HEK293 (cell line): ENCODE measurements at regions of chr9 and their contacts with region 1.

Region 1: GRCh38 chr9:114487607-114488300 is 17.5 kb downstream of the WHRN start:
- H3K4me3 ChIP-seq: no peak overlapping the region
- H3K27ac ChIP-seq: no peak overlapping the region
- H3K4me1 ChIP-seq: no peaks in the 10 kb centered on the region
- CTCF ChIP-seq: peak; percentile 65; the same call in 1 of the 2 replicates

Region 2: GRCh38 chr9:114382699-114383520 is 104.8 kb before region 1 on chr9:
- CTCF ChIA-PET with region 1: no interaction called
- POLR2A ChIA-PET with region 1: no interaction called
- H3K4me3 ChIP-seq: no peak overlapping the region
- H3K27ac ChIP-seq: no peak overlapping the region
- H3K4me1 ChIP-seq: no peaks in the 10 kb centered on the region
- CTCF ChIP-seq: peak; percentile 34; the same call in 1 of the 2 replicates

Region 3: GRCh38 chr9:114471157-114471556 is 16.6 kb before region 1 on chr9:
- CTCF ChIA-PET with region 1: interaction called, 10 read pairs
- POLR2A ChIA-PET with region 1: no interaction called
- H3K4me3 ChIP-seq: no peak overlapping the region
- H3K27ac ChIP-seq: no peak overlapping the region
- H3K4me1 ChIP-seq: no peaks in the 10 kb centered on the region
- CTCF ChIP-seq: no peak

Region 4: DNA sequence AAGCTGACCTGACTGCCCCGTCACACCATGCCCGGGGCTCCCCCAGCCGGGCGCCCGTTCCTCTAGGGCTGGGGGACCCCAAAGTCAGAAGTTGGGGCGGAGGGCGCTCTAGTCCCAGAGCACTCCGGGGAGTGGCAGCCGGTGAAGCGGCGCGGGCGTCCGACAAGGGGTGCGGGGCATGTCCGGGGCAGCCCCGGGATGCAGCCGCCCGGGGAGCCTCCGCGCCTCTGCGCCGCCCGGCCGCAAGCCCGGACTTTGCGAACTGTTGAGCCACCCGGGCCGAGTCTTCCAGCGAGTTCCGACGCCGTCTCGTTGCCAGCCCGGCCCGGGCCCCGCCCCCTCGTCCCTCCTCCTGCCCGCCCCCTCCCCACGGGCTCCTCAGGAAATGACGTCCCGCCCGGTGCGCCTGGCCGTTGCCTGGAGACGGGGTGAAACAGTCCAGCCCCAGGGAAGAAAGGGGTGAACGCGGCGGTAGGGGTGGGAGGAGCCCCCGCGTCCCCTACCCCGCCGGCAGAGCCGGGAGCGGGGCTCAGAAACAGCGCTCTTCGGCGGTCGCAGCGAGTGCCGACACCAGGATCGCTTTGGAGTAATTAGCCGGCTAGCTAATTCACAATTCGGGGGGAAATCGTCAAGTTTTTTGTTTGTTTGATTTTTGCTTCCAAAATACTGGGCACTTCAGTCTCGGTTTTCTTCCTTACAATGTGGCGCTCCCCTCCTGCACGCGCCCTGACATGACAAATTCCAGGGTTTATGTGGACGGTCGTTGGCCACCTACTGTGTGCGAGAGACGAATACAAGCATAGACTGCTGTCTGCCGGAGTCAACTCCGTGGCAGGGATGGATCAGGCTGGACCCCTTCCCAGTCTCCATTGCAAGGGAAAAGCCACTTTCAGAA is 17.7 kb after region 1 on chr9 and contains the start of gene WHRN:
- CTCF ChIA-PET with region 1: interaction called, 25 read pairs
- POLR2A ChIA-PET with region 1: interaction called, 3 read pairs
- H3K4me3 ChIP-seq: peak within 1 kb of the TSS; percentile 66
- H3K27ac ChIP-seq: no peak within 1 kb of the TSS; the same call in 1 of the 2 replicates
- H3K4me1 ChIP-seq: peaks cover 10% of the 10 kb centered on the region
- CTCF ChIP-seq: no peak